PC-9 (cell line): ENCODE measurements at regions of chr12 and their contacts with region 1.

Region 1: GRCh38 chr12:47819896-47820630 is at the start of gene HDAC7:
- DNase-seq: peak; percentile 54 to 68
- H3K4me3 ChIP-seq: peak within 1 kb of the TSS; percentile 95
- H3K27ac ChIP-seq: peak within 1 kb of the TSS; percentile 80
- H3K4me1 ChIP-seq: peaks cover 76% of the 10 kb centered on the region
- H3K27me3 ChIP-seq: no peaks in the 10 kb centered on the region
- CTCF ChIP-seq: no peak
- total RNA-seq, gene HDAC7: 106 and 114 TPM in 2 replicates

Region 2: DNA sequence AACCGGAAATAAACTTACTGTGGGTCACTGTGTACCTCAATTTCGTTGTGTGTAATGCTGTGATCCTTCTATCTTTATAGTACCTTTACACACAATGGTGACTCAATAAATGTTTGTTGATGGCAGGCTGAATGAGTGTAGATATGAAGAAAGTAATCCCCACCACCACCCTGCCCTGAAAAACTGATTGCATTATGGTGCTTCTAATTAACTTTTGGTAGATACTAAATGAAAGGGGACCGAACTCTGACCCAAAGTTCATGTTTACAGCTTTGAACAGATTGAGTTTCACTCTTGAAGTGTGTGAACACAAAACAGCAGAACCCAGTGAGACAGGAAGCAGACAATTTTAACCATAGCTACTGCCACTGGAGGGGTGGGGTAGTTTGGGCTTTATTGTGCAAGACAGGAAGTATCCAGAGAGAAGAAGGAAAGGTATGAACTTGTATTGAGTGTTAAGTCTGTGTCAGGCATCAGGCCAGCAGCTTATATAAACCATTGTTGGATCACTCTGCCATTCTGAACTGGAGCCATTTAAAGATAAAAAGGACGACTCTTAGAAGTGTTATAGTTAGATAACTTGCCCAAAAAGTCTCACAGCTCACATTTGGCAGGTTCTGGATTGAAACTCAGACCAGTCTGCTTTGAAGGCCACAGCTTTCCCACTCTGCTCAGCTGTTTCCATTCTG is 543.3 kb before region 1 on chr12:
- CTCF ChIA-PET with region 1: no interaction called
- POLR2A ChIA-PET with region 1: no interaction called
- intact Hi-C with region 1: loop called (anchors 10 kb)
- DNase-seq: peak; percentile 64 to 80
- H3K4me3 ChIP-seq: peak overlapping the region; percentile 1; the same call in 1 of the 2 replicates
- H3K27ac ChIP-seq: peak overlapping the region; percentile 93
- H3K4me1 ChIP-seq: peaks cover 76% of the 10 kb centered on the region
- H3K27me3 ChIP-seq: no peaks in the 10 kb centered on the region
- CTCF ChIP-seq: no peak

Region 3: GRCh38 chr12:47547085-47547484 is 273.0 kb before region 1 on chr12:
- CTCF ChIA-PET with region 1: no interaction called
- POLR2A ChIA-PET with region 1: no interaction called
- intact Hi-C with region 1: no loop called
- DNase-seq: no peak
- H3K4me3 ChIP-seq: no peak overlapping the region
- H3K27ac ChIP-seq: no peak overlapping the region
- H3K4me1 ChIP-seq: no peaks in the 10 kb centered on the region
- H3K27me3 ChIP-seq: no peaks in the 10 kb centered on the region
- CTCF ChIP-seq: peak; percentile 30; the same call in 1 of the 2 replicates

Region 4: GRCh38 chr12:47616440-47616839 is 203.6 kb before region 1 on chr12:
- CTCF ChIA-PET with region 1: no interaction called
- POLR2A ChIA-PET with region 1: no interaction called
- intact Hi-C with region 1: no loop called
- DNase-seq: no peak
- H3K4me3 ChIP-seq: no peak overlapping the region
- H3K27ac ChIP-seq: no peak overlapping the region
- H3K4me1 ChIP-seq: no peaks in the 10 kb centered on the region
- H3K27me3 ChIP-seq: no peaks in the 10 kb centered on the region
- CTCF ChIP-seq: no peak

Region 5: DNA sequence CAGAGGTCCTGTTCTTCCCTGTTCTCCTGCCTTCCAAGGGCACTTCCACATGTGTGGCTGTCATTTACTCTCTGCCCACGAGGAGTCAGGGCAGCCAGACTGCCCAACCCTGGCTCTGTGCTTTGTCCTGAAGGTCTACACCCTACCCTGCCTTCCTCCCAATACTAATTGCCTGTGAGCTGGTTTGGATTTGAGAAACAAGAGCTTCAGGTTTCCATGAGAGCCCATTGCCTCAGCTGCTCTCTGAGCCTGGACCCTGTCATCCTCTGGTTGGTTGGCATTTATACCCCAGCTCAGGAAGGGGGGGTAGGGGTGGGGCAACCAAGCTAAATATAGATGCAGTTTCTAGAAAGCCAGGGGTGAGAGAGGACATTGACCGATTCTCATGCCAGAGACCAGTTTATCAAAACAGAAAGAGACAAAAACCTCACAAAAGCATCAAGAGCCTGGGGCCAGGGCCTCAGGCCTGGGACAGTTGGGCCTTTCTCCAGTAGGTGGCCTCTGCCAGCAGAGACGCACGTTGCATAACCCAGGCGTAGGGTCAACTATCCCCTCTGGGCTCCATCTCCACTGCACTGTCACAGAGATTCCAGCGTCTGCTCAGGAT is 50.2 kb after region 1 on chr12:
- CTCF ChIA-PET with region 1: no interaction called
- POLR2A ChIA-PET with region 1: no interaction called
- intact Hi-C with region 1: no loop called
- DNase-seq: no peak
- H3K4me3 ChIP-seq: no peak overlapping the region
- H3K27ac ChIP-seq: no peak overlapping the region
- H3K4me1 ChIP-seq: no peaks in the 10 kb centered on the region
- H3K27me3 ChIP-seq: no peaks in the 10 kb centered on the region
- CTCF ChIP-seq: peak; percentile 51